Heart left ventricle (tissue), 16 donors: ENCODE measurements at regions of chr13 and their contacts with region 1.

Region 1: DNA sequence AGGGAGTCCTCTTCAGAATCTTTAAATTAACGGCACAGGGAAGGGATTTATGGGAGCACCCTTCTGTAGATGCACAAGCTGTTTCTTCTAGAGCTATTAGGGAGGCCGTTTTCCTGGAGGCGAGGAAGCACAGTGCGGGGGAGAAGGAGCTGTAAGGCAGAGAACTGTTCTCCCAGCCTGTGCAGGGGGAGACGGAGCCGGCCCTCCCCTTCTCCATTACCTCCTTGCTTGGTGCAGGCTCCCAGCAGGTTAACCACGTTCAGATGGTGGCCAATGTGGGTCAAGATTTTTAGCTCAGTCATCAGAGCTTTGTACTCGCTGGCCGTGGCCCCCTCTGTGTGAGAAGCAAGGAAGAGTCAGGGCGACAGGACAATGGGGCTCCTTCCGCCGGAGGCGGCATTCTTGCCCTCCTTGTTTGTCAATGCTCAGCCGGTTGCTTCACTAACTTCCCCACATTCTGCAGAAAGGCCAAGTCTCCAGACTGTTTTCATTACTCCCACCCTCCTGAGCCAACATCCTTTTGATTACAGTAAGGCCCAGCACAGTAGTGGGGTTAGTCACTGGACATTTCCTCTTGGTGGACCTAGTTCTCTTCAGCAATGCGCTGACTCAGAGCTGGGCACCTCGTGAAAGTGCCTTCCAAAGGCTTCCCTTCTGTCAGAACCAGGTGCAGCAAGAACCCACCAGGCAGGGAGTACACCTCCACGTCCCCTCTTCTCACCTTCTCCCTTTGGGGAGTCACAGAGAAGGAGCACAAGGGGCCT is 165.4 kb downstream of the FLT1 start:
- DNase-seq: peak in 2 of 5 donors; percentile 27 to 45
- ATAC-seq: peak in 3 of 4 donors; percentile 83 to 86 (median 86)
- H3K4me3 ChIP-seq: no peak overlapping the region
- H3K27ac ChIP-seq: peak overlapping the region in 7 of 12 donors; percentile 16 to 53 (median 41)
- H3K4me1 ChIP-seq: peaks cover 2 to 41% (median 20%) of the 10 kb centered on the region in 12 donors
- H3K27me3 ChIP-seq: no peaks in the 10 kb centered on the region
- CTCF ChIP-seq: no peak
- POLR2A ChIP-seq: no peak

Region 2: DNA sequence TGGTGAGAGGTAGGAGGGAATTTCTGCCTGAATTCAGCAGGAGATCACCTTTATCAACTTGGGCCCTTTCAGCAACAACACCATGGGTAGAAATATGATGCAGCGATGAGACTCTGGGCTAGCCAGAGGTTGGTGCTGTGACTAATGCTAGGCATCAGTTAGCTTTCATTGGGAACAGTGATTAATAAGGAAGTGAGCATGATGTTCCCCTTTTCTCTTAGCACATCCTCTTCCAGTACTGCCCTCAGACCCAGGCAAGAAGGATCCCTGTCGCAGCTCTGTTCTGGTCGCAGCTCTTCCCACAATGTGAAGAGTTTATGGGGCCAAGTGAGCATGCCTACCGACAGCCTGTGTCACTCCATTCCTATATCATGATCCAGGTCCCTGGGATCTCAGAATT is 64.8 kb after region 1 on chr13:
- intact Hi-C with region 1: loop called in 1 of 10 experiments (anchors 10 kb)
- DNase-seq: no peak
- ATAC-seq: peak in 3 of 4 donors; percentile 27 to 66 (median 51)
- H3K4me3 ChIP-seq: no peak overlapping the region
- H3K27ac ChIP-seq: peak overlapping the region in 6 of 12 donors; percentile 0 to 66 (median 19)
- H3K4me1 ChIP-seq: peaks cover 0 to 70% (median 26%) of the 10 kb centered on the region in 12 donors
- H3K27me3 ChIP-seq: no peaks in the 10 kb centered on the region
- CTCF ChIP-seq: no peak
- POLR2A ChIP-seq: no peak